GM12878 (cell line): ENCODE measurements at regions of chr21 and their contacts with region 1.

Region 1: GRCh38 chr21:32929633-32930038 is 96.1 kb upstream of the OLIG2 start:
- DNase-seq: peak; percentile 69
- ATAC-seq: peak; percentile 79
- H3K4me3 ChIP-seq: no peak overlapping the region; the same call in 1 of the 2 replicates
- H3K27ac ChIP-seq: peak overlapping the region; percentile 73
- H3K4me1 ChIP-seq: peaks cover 31% of the 10 kb centered on the region
- H3K27me3 ChIP-seq: no peaks in the 10 kb centered on the region
- CTCF ChIP-seq: no peak
- EP300 ChIP-seq: peak; percentile 33 to 36; a peak in 2 of 4 replicates
- POLR2A ChIP-seq: no peak
- RAD21 ChIP-seq: no peak

Region 2: DNA sequence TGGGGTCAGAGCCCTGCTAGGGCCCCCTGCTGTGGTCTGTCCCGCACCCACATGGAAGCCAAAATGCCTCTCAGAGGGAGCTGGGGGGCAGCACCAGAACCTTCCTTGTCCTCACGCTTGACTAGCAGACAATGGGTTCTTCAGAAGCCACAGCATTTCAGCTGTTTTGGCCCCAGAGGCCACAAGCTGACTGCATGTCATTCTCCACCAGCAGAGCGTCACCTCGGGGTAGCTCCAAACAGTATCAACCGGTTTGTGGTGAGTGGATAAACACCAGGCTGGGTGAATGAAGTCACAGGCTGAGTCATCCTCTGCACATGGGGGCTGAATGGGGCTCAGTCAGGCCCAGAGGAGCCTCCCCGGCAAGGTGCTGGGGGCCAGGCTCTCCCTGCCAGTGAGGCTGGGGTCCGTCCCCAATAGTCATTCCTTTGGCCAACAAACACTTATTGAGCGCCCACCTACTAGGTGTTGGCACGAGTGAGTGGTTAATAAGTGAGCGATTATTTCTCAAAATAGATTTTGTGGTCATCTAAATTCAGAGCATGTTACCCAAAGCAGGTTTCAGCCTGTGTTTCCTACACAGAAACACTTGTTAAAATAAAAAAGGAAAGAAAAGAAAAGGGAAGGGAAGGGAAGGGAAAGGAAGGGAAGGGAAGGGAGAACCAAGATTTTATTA is 149.4 kb after region 1 on chr21:
- CTCF ChIA-PET with region 1: interaction called, 3 read pairs
- POLR2A ChIA-PET with region 1: no interaction called
- RAD21 ChIA-PET with region 1: interaction called, 7 read pairs
- SMC1A ChIA-PET with region 1: no interaction called
- in situ Hi-C with region 1: no loop called
- intact Hi-C with region 1: loop called (anchors 2 kb)
- DNase-seq: peak; percentile 88
- ATAC-seq: peak; percentile 98
- H3K4me3 ChIP-seq: no peak overlapping the region
- H3K27ac ChIP-seq: no peak overlapping the region
- H3K4me1 ChIP-seq: peaks cover 18% of the 10 kb centered on the region
- H3K27me3 ChIP-seq: peaks cover 4 to 6% of the 10 kb centered on the region in 2 experiments
- CTCF ChIP-seq: peak in 1 of 3 experiments; percentile 19; a peak in 2 of 6 replicates
- EP300 ChIP-seq: peak; percentile 87 to 90
- POLR2A ChIP-seq: no peak
- RAD21 ChIP-seq: no peak